ENCODE measurements at regions of chr1 and their contacts with region 1.

Region 1: DNA sequence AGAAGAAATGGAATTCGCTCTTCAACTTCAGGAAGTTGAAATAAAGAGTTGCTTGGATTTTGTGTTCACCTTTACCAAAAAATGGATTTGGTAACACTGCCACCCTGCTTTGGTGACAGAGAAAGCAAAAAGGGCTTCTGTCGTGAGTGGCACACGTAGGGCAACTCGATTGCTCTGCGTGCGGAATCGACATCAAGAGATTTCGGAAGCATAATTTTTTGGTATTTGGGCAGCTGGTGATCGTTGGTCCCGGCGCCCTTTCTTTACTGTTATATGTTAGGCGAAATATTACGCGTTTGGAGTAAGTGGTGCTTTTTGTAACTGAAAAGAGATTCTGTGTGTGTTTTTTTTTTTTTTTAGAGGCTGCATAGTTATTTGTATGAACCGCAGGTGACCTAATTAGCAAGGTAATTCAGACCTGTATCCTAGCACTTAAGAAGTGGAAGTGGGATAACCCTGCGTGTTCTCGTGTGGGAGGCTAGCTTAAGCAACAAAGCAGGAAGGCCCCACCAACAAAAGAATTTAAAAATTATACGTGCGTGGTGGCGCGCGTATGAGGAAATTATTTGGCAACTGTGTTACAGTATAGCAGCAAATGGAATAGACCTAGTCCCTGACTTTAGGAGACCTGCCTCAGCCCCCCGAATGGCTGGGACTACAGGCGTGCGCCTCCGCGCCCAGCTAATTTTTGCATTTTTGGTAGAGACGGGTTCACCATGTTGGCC is at the start of gene RNU11:
- H3K4me3 Mint-ChIP-seq: peak within 1 kb of the TSS; percentile 78
- H3K27ac Mint-ChIP-seq: peak within 1 kb of the TSS; percentile 97
- H3K4me1 Mint-ChIP-seq: peaks cover 38% of the 10 kb centered on the region
- H3K27me3 Mint-ChIP-seq: no peaks in the 10 kb centered on the region

Region 2: GRCh38 chr1:28296401-28297261 is 352.0 kb before region 1 on chr1:
- intact Hi-C with region 1: no loop called
- H3K4me3 Mint-ChIP-seq: no peak overlapping the region
- H3K27ac Mint-ChIP-seq: no peak overlapping the region
- H3K4me1 Mint-ChIP-seq: peaks cover 14% of the 10 kb centered on the region
- H3K27me3 Mint-ChIP-seq: peaks cover 2% of the 10 kb centered on the region

Region 3: GRCh38 chr1:28736450-28737306 is 88.0 kb after region 1 on chr1 and contains the start of gene YTHDF2:
- intact Hi-C with region 1: loop called (anchors 2 kb)
- H3K4me3 Mint-ChIP-seq: peak within 1 kb of the TSS; percentile 90
- H3K27ac Mint-ChIP-seq: peak within 1 kb of the TSS; percentile 93
- H3K4me1 Mint-ChIP-seq: peaks cover 37% of the 10 kb centered on the region
- H3K27me3 Mint-ChIP-seq: no peaks in the 10 kb centered on the region

Measured in dendritic cell treated with granulocyte-macrophage colony-stimulating factor and Interleukin-4, amounts not matched to agents 40 ng/mL and 50 ng/mL, for 4 days (primary cell).